ENCODE measurements at regions of chr17 and their contacts with region 1.

Region 1: GRCh38 chr17:81253358-81254131 is 14.4 kb downstream of the NDUFAF8 start:
- DNase-seq: no peak
- H3K4me3 ChIP-seq: no peak overlapping the region
- CTCF ChIP-seq: peak; percentile 77

Region 2: GRCh38 chr17:81207610-81208581 is 45.6 kb before region 1 on chr17:
- CTCF ChIA-PET with region 1: no interaction called
- POLR2A ChIA-PET with region 1: no interaction called
- DNase-seq: no peak
- H3K4me3 ChIP-seq: no peak overlapping the region
- CTCF ChIP-seq: no peak

Region 3: DNA sequence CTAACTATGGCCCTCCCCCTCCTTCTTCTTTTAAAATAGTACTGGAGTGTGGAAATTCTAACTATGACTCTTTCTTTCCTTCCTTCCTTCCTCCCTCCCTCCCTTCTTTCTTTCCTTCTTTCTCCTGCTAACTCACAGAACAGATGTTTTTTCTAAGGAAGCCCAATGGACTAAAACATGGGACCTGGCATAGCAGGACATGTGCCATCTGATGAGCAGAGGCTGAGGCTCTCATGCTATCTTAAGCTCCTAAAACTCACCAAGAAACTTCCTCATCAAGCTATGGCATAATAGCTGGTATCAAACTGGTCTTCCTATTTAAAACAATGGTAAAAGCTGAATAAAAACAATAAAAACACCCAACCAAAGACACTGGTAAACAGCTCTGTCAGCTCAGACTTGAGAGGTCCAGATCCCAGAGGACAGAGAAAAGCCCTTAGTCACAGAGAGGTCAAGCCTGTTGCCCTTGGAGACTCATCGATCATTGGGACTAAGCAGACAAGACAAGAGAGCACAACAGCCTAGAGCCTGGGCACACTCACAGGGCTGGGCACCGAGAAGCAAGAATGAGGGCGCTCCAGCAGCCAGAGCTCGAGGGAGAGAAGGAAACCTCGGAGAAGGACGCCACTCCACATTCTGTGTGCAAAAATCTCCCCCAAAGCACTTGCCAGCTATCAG is 14.0 kb after region 1 on chr17:
- CTCF ChIA-PET with region 1: interaction called, 11 read pairs
- POLR2A ChIA-PET with region 1: no interaction called
- DNase-seq: no peak
- H3K4me3 ChIP-seq: no peak overlapping the region
- CTCF ChIP-seq: no peak

Region 4: DNA sequence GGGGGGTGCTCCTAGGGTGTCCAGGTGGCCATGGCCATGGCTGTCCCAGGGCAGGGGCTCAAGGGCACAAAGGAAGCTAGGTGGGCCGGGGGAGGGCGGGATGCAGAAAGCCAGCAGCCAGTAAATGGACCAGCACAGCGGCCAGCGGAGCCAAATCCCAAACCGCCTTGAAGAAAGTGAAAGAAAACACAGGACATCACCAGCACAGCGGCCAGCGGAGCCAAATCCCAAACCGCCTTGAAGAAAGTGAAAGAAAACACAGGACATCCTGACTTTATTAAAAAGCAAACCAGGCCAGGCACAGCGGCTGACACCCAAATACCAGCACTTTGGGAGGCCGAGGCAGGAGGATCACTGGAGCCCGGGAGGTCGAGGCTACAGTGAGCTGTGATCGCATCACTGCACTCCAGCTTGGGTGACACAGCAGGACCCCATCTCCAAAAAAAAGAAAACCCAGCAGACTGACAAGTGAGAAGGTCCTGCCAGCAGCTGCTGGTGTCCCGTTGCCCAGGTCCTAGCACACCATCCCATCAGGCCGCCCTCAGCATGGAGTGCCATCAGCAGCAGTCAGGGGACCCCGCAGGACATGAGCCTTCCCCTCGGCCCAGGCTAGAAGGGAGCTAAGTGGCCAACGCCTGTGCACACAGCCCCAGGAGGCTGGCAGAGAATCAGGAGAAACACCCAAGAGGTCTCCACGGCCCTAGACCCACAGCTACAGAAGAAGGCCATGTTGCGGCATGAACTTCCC is 24.6 kb after region 1 on chr17:
- CTCF ChIA-PET with region 1: interaction called, 11 read pairs
- POLR2A ChIA-PET with region 1: interaction called, 3 read pairs
- DNase-seq: no peak
- H3K4me3 ChIP-seq: no peak overlapping the region
- CTCF ChIP-seq: no peak

Region 5: GRCh38 chr17:81294856-81295680 is 41.5 kb after region 1 on chr17 and contains the start of gene SLC38A10:
- CTCF ChIA-PET with region 1: interaction called, 19 read pairs
- POLR2A ChIA-PET with region 1: no interaction called
- DNase-seq: no peak
- H3K4me3 ChIP-seq: peak within 1 kb of the TSS; percentile 85
- CTCF ChIP-seq: no peak

Region 6: GRCh38 chr17:81394921-81395599 is 141.5 kb after region 1 on chr17 and contains the start of gene BAHCC1:
- CTCF ChIA-PET with region 1: interaction called, 24 read pairs
- POLR2A ChIA-PET with region 1: no interaction called
- DNase-seq: peak; percentile 96
- H3K4me3 ChIP-seq: peak within 1 kb of the TSS; percentile 69
- CTCF ChIP-seq: peak; percentile 10

Measured in AG04449 (cell line).